ENCODE measurements at regions of chr22 and their contacts with region 1.

Region 1: GRCh38 chr22:23849009-23850006 is 8.4 kb upstream of the SLC2A11 start:
- DNase-seq: peak; percentile 87
- ATAC-seq: peak; percentile 92
- H3K4me3 Mint-ChIP-seq: no peak overlapping the region
- H3K27ac Mint-ChIP-seq: no peak overlapping the region
- H3K4me1 Mint-ChIP-seq: peaks cover 7% of the 10 kb centered on the region
- H3K27me3 Mint-ChIP-seq: peaks cover 2% of the 10 kb centered on the region
- CTCF ChIP-seq: peak; percentile 97

Region 2: GRCh38 chr22:23626286-23626975 is 222.9 kb before region 1 on chr22:
- CTCF ChIA-PET with region 1: interaction called, 8 read pairs
- POLR2A ChIA-PET with region 1: no interaction called
- intact Hi-C with region 1: loop called (anchors 5 kb)
- DNase-seq: no peak
- ATAC-seq: no peak
- H3K4me3 Mint-ChIP-seq: no peak overlapping the region
- H3K27ac Mint-ChIP-seq: no peak overlapping the region
- H3K4me1 Mint-ChIP-seq: no peaks in the 10 kb centered on the region
- H3K27me3 Mint-ChIP-seq: no peaks in the 10 kb centered on the region
- CTCF ChIP-seq: no peak

Region 3: DNA sequence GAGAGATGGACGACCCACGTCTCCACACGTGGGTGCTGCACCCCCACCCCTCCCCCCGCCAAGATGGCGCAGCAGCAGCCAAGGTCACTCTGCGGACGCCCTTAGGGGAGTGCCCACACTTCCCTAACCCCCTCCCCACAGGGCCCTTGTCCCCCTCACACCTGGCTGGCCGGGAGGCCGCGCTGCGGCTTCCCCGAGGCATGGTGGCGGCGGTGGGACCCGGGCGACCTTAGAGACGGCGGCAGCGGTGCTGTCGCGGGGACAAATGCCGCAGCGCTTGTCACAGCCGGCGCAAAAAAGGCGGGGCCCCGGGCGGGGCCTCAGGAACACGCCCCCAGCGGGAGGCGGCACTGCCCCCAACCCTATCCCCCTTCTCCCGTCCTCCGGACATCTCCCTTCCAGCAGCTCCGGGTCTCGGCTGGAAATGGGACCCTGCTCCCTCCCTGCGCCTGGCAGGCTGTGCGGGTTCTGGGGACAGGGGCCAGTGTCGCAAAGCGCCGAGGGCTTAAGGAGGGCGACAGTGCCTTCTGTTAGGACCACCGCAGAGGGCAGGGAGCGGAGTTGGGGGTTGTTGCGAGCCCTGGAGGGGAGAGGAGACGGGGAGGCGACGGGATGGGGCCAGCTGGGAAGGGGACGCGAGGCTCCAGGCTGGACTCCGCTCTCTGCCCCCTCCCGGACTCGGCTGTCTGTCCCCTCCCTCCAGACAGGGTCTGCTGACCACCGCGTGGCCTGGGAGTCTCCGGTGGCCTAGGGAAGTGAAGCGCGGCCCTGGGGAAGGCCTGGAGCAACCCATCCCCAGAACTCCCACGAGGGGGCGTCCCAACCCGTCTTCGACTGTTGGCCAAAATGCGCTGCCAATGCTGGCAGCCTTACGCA is 81.4 kb before region 1 on chr22 and contains the start of gene CHCHD10:
- CTCF ChIA-PET with region 1: interaction called, 48 read pairs
- POLR2A ChIA-PET with region 1: interaction called, 3 read pairs
- intact Hi-C with region 1: loop called (anchors 5 kb)
- DNase-seq: peak; percentile 85
- ATAC-seq: peak; percentile 66
- H3K4me3 Mint-ChIP-seq: peak within 1 kb of the TSS; percentile 81
- H3K27ac Mint-ChIP-seq: peak within 1 kb of the TSS; percentile 81
- H3K4me1 Mint-ChIP-seq: peaks cover 41% of the 10 kb centered on the region
- H3K27me3 Mint-ChIP-seq: no peaks in the 10 kb centered on the region
- CTCF ChIP-seq: peak; percentile 85
- total RNA-seq, gene CHCHD10: 197 to 212 TPM

Region 4: DNA sequence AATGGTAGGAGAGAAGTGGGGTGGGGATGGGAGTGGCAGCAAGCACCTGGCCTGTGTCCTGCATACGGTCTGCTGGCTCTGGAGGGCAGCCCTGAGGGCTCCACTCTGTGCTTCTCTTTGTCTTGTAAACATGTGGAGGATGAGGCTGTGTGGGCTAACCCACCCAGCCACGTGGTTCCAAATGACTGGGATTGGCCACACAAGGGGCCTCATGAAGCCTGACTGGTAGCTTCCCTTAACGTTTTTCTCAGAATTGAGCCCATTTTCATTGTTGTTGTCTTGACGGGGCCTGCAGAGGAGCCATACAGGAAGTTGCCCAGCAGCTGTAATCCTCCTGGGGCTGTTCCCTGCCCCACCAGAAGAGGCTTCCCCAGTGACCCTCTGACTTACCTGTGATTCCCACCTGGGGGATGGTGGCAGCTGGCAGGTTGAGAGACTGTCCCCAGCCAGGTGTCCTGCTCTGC is 28.5 kb before region 1 on chr22:
- CTCF ChIA-PET with region 1: interaction called, 10 read pairs
- POLR2A ChIA-PET with region 1: no interaction called
- intact Hi-C with region 1: no loop called
- DNase-seq: peak; percentile 74
- ATAC-seq: peak; percentile 92
- H3K4me3 Mint-ChIP-seq: no peak overlapping the region
- H3K27ac Mint-ChIP-seq: peak overlapping the region; percentile 84
- H3K4me1 Mint-ChIP-seq: peaks cover 10% of the 10 kb centered on the region
- H3K27me3 Mint-ChIP-seq: no peaks in the 10 kb centered on the region
- CTCF ChIP-seq: peak; percentile 16

Region 5: GRCh38 chr22:23878219-23878618 is 28.9 kb after region 1 on chr22:
- CTCF ChIA-PET with region 1: interaction called, 10 read pairs
- POLR2A ChIA-PET with region 1: no interaction called
- intact Hi-C with region 1: no loop called
- DNase-seq: no peak
- ATAC-seq: no peak
- H3K4me3 Mint-ChIP-seq: no peak overlapping the region
- H3K27ac Mint-ChIP-seq: no peak overlapping the region
- H3K4me1 Mint-ChIP-seq: no peaks in the 10 kb centered on the region
- H3K27me3 Mint-ChIP-seq: no peaks in the 10 kb centered on the region
- CTCF ChIP-seq: no peak

Region 6: GRCh38 chr22:23893943-23894709 is 44.8 kb after region 1 on chr22 and contains the start of gene MIF:
- CTCF ChIA-PET with region 1: interaction called, 15 read pairs
- POLR2A ChIA-PET with region 1: interaction called, 7 read pairs
- intact Hi-C with region 1: no loop called
- DNase-seq: peak; percentile 96
- ATAC-seq: peak; percentile 91
- H3K4me3 Mint-ChIP-seq: peak within 1 kb of the TSS; percentile 94
- H3K27ac Mint-ChIP-seq: peak within 1 kb of the TSS; percentile 99
- H3K4me1 Mint-ChIP-seq: peaks cover 21% of the 10 kb centered on the region
- H3K27me3 Mint-ChIP-seq: no peaks in the 10 kb centered on the region
- CTCF ChIP-seq: peak; percentile 85
- total RNA-seq, gene MIF: 1,485 to 1,525 TPM